Calu3 (cell line): ENCODE measurements at regions of chr17 and their contacts with region 1.

Region 1: DNA sequence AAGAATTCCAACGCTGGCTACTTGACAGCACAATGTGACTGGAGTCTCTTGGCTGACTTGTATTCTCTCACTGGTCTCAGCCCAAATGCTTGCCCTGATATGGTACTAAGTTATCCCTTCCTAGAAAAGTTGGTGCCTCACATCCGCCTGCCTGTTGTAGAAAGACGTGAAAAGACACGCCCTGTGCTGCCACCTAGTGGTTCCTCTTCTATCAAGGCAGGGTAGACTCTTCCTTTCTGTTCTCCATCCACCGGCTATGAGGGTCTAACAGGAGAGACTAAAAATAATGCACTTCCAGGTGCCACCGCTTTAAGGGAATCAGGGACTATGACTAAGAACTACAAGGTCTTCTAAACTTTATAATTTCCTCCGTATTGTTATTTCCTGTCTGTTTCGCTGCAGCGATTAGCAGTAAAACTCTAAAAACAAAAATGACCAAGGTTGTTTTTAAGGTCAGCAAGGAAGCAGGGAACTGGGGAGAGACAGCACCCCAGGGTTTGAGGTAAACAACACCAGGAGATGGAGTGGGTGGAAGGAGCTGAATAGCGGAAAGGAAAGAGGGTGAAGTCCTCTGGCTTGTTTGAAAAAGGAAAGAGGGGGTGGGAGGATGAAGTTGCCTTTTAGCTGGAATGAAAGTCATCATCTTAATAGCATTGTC is 109.5 kb downstream of the YPEL2 start:
- DNase-seq: peak; percentile 81
- H3K4me3 Mint-ChIP-seq: no peak overlapping the region
- H3K27ac Mint-ChIP-seq: no peak overlapping the region
- H3K4me1 Mint-ChIP-seq: peaks cover 7% of the 10 kb centered on the region
- H3K27me3 Mint-ChIP-seq: no peaks in the 10 kb centered on the region
- CTCF ChIP-seq: peak; percentile 58

Region 2: DNA sequence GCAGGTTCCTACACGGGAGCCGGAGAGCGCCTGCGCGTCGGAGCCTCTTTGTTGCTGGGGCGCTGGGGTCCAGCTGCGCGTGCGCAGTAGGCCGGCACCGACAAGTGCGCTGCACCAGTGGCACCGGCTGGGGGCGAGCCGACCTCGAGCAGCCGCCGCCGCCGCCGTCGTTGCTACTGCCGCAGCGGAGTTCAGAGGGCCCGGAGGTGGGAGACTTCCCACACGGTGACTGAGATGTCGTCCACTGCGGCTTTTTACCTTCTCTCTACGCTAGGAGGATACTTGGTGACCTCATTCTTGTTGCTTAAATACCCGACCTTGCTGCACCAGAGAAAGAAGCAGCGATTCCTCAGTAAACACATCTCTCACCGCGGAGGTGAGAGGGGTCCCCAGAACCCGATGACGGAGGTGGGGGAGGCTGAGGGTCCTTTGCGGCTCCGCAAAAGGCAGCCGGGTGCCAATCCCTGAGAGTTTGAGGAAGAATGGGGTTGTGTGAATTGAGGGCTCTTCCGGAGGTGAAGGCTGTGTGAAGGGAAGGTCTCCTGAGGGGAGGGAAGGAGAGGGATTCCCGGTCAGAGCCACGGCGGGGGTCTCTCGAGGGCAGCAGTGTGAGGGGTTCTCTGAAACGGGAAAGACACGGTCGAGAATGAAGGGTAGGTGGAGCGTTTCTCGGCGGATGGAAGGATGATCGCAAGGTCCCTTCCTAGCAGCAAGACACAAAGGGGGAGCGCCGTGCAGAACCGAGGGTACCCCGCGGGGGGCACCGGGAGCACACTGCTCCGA is 220.3 kb before region 1 on chr17 and contains the start of gene GDPD1:
- CTCF ChIA-PET with region 1: no interaction called
- intact Hi-C with region 1: loop called (anchors 2 kb)
- DNase-seq: peak; percentile 94
- H3K4me3 Mint-ChIP-seq: peak within 1 kb of the TSS; percentile 94
- H3K27ac Mint-ChIP-seq: peak within 1 kb of the TSS; percentile 88
- H3K4me1 Mint-ChIP-seq: no peaks in the 10 kb centered on the region
- H3K27me3 Mint-ChIP-seq: no peaks in the 10 kb centered on the region
- CTCF ChIP-seq: peak; percentile 57
- total RNA-seq, gene GDPD1: 2.6 and 3.4 TPM in 2 replicates

Region 3: DNA sequence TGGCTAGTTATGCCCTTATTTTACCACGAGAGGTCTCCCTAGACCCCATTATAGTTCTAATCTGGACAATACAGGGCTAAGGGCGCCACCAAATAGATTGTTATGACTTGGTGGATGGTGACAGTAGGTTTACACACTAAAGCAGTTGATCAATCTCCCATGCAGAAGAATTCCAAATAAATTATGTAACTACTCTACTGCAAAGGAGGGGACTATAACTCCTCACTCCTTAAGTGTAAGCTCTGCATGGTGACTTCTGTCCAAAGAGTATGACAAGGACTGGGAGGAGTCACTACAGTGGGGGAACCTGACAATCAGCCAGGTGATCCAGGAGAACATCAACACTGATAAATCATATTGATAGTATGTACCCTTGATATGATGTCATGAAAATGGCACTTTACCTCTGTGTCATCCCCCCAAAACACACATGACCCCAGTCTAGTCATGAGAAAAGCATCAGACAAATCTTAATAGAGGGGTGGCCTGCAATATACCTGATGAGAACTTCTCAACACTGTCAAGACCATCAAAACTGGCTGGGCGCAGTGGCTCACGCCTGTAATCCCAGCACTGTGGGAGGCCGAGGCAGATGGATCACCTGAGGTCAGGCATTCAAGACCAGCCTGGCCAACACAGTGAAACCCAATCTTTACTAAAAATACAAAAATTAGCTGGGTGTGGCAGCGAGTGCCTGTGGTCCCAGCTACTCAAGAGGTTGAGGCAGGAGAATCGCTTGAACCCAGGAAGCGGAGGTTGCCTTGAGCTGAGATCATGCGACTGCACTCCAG is 129.6 kb before region 1 on chr17:
- CTCF ChIA-PET with region 1: interaction called, 12 read pairs
- intact Hi-C with region 1: loop called (anchors 1 kb)
- DNase-seq: peak; percentile 28
- H3K4me3 Mint-ChIP-seq: no peak overlapping the region
- H3K27ac Mint-ChIP-seq: no peak overlapping the region
- H3K4me1 Mint-ChIP-seq: no peaks in the 10 kb centered on the region
- H3K27me3 Mint-ChIP-seq: no peaks in the 10 kb centered on the region
- CTCF ChIP-seq: no peak

Region 4: DNA sequence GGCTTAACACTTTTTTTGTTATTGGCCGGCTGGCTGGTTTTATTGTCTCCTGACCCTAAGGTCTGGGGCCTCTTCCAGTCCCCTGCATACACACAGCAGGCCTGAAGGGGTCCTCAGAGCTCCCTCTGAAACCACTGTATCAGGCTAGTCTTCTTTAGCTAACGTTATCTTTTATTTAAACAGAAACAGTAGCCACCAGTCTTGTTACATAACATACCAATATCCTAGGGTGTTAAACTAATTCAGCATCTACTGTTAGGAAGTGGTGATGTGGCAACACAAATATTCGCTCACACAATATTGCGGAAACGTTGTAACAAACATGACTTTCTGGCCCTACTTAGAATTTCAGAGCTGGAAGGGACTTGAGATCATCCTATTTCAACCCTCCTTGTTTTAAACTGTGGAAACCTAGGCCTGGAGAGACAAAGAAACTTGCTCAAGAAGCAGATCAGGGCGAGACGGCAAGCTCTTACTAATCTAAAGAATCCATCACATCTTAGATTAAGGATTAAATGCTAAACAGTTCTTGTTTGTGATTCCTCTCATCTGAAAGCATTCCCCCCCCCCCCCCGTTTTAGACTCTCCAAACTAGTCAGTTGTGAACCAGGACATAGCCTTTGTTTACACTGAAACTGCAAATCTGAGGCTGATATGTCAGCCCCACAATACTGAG is 111.1 kb before region 1 on chr17:
- CTCF ChIA-PET with region 1: interaction called, 6 read pairs
- intact Hi-C with region 1: loop called (anchors 1 kb)
- DNase-seq: peak; percentile 45
- H3K4me3 Mint-ChIP-seq: peak overlapping the region; percentile 73
- H3K27ac Mint-ChIP-seq: no peak overlapping the region
- H3K4me1 Mint-ChIP-seq: peaks cover 17% of the 10 kb centered on the region
- H3K27me3 Mint-ChIP-seq: peaks cover 9% of the 10 kb centered on the region
- CTCF ChIP-seq: peak; percentile 42

Region 5: GRCh38 chr17:59415397-59415796 is 25.5 kb before region 1 on chr17:
- CTCF ChIA-PET with region 1: no interaction called
- intact Hi-C with region 1: no loop called
- DNase-seq: no peak
- H3K4me3 Mint-ChIP-seq: no peak overlapping the region
- H3K27ac Mint-ChIP-seq: no peak overlapping the region
- H3K4me1 Mint-ChIP-seq: no peaks in the 10 kb centered on the region
- H3K27me3 Mint-ChIP-seq: peaks cover 48% of the 10 kb centered on the region
- CTCF ChIP-seq: no peak